Activated CD4-positive, alpha-beta memory T cell treated with anti-CD3 and anti-CD28 coated beads for 36 hours (primary cell): ENCODE measurements at regions of chr1 and their contacts with region 1.

Region 1: DNA sequence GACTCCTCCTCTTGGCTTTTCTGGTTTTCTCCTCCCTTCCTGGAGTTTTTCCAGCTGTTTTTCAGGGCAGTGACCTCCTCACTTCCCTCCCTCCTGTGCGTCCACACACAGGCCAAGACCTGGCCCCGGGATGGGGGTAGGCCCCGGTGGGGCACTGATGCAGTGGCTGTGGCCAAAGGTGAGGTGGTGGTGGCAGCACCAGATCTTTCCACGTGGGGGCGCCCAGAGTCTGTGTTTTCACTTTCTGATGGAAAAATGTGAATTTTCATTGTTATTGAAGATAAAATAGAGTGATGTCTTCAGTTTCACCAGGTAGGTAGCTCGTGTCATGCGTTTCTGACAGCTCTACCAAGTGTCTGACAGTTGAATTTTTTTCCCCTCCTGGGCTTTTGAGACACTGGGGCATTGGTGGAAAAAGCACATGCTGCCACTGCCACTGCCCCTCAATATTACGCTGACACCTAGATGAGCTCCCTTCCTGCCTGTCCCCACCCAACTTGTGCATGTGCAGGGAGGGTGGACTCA is 39.9 kb upstream of the MAGOH start:
- DNase-seq: peak; percentile 77
- H3K4me3 Mint-ChIP-seq: no peak overlapping the region
- H3K27ac Mint-ChIP-seq: no peak overlapping the region
- H3K4me1 Mint-ChIP-seq: no peaks in the 10 kb centered on the region
- H3K27me3 Mint-ChIP-seq: no peaks in the 10 kb centered on the region

Region 2: DNA sequence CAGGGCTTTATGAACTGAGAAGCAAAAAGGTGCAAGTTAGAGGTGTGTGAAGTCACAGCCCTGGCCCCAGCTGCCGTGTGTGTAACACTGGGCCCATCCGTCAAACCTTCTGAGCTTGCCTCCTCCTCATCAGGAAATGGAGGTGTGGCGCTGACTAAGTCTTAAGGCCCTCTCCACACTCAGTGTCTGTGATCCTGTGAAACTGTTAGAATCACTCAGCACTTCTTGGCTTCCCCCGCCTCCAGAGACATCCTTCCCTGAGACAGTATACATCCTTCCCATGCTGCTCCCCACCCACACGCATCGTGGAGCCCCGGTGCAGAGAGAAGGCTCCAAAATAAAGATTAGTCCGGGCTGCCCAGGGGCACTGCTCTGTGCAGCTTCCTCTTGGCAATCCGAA is 16.3 kb after region 1 on chr1:
- CTCF ChIA-PET with region 1: interaction called, 16 read pairs
- POLR2A ChIA-PET with region 1: no interaction called
- intact Hi-C with region 1: no loop called
- DNase-seq: peak; percentile 84
- H3K4me3 Mint-ChIP-seq: no peak overlapping the region
- H3K27ac Mint-ChIP-seq: peak overlapping the region; percentile 67
- H3K4me1 Mint-ChIP-seq: peaks cover 42% of the 10 kb centered on the region
- H3K27me3 Mint-ChIP-seq: no peaks in the 10 kb centered on the region

Region 3: DNA sequence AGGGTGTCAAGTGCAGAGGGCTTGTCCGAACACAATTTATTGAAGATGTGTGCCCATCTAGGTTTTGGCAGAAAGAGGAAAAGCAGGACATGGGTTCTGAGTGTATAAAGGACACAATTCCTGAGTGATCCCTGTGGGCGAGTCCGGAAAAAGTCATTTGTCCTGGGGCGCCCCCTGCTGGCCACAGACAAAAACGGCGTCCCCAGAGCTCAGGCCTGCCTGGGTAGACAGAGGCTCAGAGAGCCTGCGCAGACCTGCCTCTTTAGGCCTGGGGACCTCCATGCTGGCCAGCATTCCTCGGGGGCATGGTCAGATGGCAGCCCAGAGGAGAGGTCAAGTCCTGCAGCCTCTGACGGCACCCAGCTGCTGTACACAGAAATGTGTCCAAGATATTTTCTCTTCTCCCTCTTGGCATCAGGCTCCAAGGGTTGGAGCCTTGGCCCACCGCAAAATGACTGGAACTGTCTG is 115.1 kb after region 1 on chr1:
- CTCF ChIA-PET with region 1: interaction called, 163 read pairs
- POLR2A ChIA-PET with region 1: interaction called, 3 read pairs
- intact Hi-C with region 1: loop called (anchors 1 kb)
- DNase-seq: peak; percentile 80
- H3K4me3 Mint-ChIP-seq: no peak overlapping the region
- H3K27ac Mint-ChIP-seq: no peak overlapping the region
- H3K4me1 Mint-ChIP-seq: peaks cover 2% of the 10 kb centered on the region
- H3K27me3 Mint-ChIP-seq: no peaks in the 10 kb centered on the region

Region 4: GRCh38 chr1:53401813-53402745 is 123.8 kb after region 1 on chr1:
- CTCF ChIA-PET with region 1: interaction called, 163 read pairs
- POLR2A ChIA-PET with region 1: no interaction called
- intact Hi-C with region 1: no loop called
- DNase-seq: no peak
- H3K4me3 Mint-ChIP-seq: no peak overlapping the region
- H3K27ac Mint-ChIP-seq: no peak overlapping the region
- H3K4me1 Mint-ChIP-seq: no peaks in the 10 kb centered on the region
- H3K27me3 Mint-ChIP-seq: no peaks in the 10 kb centered on the region

Region 5: DNA sequence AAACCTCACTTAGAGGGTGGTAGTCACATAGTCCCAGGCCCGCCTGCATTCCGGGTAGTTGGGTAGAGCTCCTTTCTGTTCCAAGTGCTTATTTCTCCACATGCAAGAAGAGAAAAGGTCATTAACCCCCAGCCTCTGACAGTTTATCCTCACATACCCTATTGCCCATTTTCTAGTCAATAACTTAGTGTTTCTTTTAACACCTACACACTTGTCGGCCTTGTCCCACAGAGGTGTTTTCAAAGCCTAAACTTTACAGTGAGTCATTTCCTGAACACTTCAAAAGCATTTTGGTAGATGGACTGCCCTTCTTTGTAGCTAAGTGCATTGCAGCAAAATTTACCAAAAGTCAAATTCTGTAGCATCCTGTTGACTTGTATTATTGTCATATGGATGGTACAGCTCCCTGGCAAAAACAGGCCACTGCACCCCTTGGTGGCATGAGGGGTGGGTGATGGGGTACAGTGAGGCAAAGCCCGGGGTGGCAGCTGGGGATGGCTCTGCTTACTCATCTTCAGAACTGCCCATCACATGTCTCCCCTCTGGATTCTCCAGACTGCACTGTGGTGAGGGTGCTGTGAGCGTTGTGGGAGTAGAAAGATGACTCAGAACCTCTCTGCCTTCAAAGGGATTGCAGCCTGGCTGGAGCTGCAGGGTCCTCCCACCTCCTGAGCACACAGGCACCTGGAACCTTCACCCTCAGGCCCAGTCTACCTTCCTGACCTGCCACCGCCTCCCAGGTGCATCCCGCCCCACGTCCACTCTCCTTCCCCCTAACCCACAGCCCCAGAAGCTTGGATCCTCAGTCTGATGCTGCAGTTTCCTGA is 135.1 kb after region 1 on chr1:
- CTCF ChIA-PET with region 1: interaction called, 11 read pairs
- POLR2A ChIA-PET with region 1: no interaction called
- intact Hi-C with region 1: no loop called
- DNase-seq: peak; percentile 82
- H3K4me3 Mint-ChIP-seq: peak overlapping the region; percentile 40
- H3K27ac Mint-ChIP-seq: peak overlapping the region; percentile 89
- H3K4me1 Mint-ChIP-seq: peaks cover 64% of the 10 kb centered on the region
- H3K27me3 Mint-ChIP-seq: no peaks in the 10 kb centered on the region